GM12878 (cell line): ENCODE measurements at regions of chrX and their contacts with region 1.

Region 1: DNA sequence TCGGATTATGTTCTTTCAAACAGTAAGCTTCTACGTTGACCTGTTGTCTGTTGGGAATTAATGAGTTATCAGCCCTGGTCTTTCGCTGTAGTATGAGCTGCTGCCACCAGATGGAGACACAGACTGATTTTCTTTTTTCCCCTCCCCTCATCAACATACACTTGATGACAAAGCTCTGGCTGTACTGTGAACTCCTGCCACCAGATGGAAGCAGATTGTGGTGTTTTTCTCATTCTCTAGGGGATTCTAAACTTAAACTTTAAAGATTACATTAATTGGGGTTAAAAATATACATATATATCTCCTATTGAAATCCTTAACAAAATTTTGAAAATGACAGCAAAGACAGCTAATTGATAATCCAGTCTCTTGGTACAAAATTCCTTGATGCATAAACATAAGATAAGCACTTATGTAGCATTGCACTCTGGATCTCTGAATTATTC is 44.8 kb downstream of the SMS start:
- DNase-seq: peak; percentile 67
- ATAC-seq: peak; percentile 74
- H3K4me3 ChIP-seq: no peak overlapping the region
- H3K27ac ChIP-seq: no peak overlapping the region
- H3K4me1 ChIP-seq: peaks cover 4% of the 10 kb centered on the region; the same call in 1 of the 2 replicates
- H3K27me3 ChIP-seq: no peaks in the 10 kb centered on the region
- CTCF ChIP-seq: peak; percentile 86 to 99 (median 97); a peak in 5 of 6 replicates
- EP300 ChIP-seq: no peak
- POLR2A ChIP-seq: no peak
- RAD21 ChIP-seq: peak; percentile 95

Region 2: GRCh38 chrX:22012051-22012450 is 26.7 kb after region 1 on chrX:
- CTCF ChIA-PET with region 1: interaction called, 4 read pairs
- POLR2A ChIA-PET with region 1: no interaction called
- RAD21 ChIA-PET with region 1: interaction called, 4 read pairs
- SMC1A ChIA-PET with region 1: interaction called, 10 read pairs
- in situ Hi-C with region 1: no loop called
- intact Hi-C with region 1: no loop called
- DNase-seq: no peak
- ATAC-seq: peak; percentile 51
- H3K4me3 ChIP-seq: no peak overlapping the region
- H3K27ac ChIP-seq: no peak overlapping the region
- H3K4me1 ChIP-seq: no peaks in the 10 kb centered on the region
- H3K27me3 ChIP-seq: no peaks in the 10 kb centered on the region
- CTCF ChIP-seq: no peak
- EP300 ChIP-seq: no peak
- POLR2A ChIP-seq: no peak
- RAD21 ChIP-seq: no peak

Region 3: GRCh38 chrX:22063284-22063683 is 77.9 kb after region 1 on chrX:
- CTCF ChIA-PET with region 1: interaction called, 23 read pairs
- POLR2A ChIA-PET with region 1: interaction called, 23 read pairs
- RAD21 ChIA-PET with region 1: interaction called, 82 read pairs
- SMC1A ChIA-PET with region 1: interaction called, 168 read pairs
- in situ Hi-C with region 1: no loop called
- intact Hi-C with region 1: loop called (anchors 2 kb)
- DNase-seq: peak; percentile 64
- ATAC-seq: peak; percentile 74
- H3K4me3 ChIP-seq: no peak overlapping the region
- H3K27ac ChIP-seq: peak overlapping the region; percentile 74
- H3K4me1 ChIP-seq: peaks cover 20% of the 10 kb centered on the region
- H3K27me3 ChIP-seq: no peaks in the 10 kb centered on the region
- CTCF ChIP-seq: no peak
- EP300 ChIP-seq: peak; percentile 52 to 73; a peak in 2 of 4 replicates
- POLR2A ChIP-seq: no peak
- RAD21 ChIP-seq: no peak

Region 4: DNA sequence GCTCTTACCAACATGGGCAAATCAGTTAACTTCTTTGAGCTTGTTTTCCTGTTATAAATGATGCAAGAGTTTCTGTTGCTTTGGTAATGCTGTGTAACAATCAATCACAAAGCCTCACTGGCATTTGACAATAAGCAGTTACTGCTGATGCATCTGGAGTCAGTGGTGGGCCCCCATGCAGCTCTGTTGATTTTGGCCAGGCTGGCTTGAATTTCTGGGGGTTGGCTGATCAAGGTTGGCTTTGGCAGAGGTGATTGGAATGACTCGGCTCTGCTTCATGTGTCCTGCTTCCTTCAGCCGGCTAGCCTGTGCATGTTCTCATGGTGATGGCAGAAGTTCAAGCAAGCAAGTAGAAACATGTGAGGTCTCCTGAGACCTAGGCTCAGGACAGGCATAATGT is 137.2 kb after region 1 on chrX:
- CTCF ChIA-PET with region 1: interaction called, 13 read pairs
- POLR2A ChIA-PET with region 1: interaction called, 6 read pairs
- RAD21 ChIA-PET with region 1: interaction called, 7 read pairs
- SMC1A ChIA-PET with region 1: interaction called, 11 read pairs
- in situ Hi-C with region 1: no loop called
- intact Hi-C with region 1: no loop called
- DNase-seq: no peak
- ATAC-seq: peak; percentile 37
- H3K4me3 ChIP-seq: no peak overlapping the region
- H3K27ac ChIP-seq: no peak overlapping the region
- H3K4me1 ChIP-seq: no peaks in the 10 kb centered on the region
- H3K27me3 ChIP-seq: no peaks in the 10 kb centered on the region
- CTCF ChIP-seq: no peak
- EP300 ChIP-seq: no peak
- POLR2A ChIP-seq: no peak
- RAD21 ChIP-seq: no peak

Region 5: GRCh38 chrX:22192417-22193060 is 207.2 kb after region 1 on chrX:
- CTCF ChIA-PET with region 1: interaction called, 22 read pairs
- POLR2A ChIA-PET with region 1: no interaction called
- RAD21 ChIA-PET with region 1: interaction called, 16 read pairs
- SMC1A ChIA-PET with region 1: interaction called, 23 read pairs
- in situ Hi-C with region 1: loop called (anchors 5 kb)
- intact Hi-C with region 1: loop called (anchors 1 kb)
- DNase-seq: peak; percentile 3
- ATAC-seq: peak; percentile 96
- H3K4me3 ChIP-seq: no peak overlapping the region
- H3K27ac ChIP-seq: no peak overlapping the region
- H3K4me1 ChIP-seq: no peaks in the 10 kb centered on the region
- H3K27me3 ChIP-seq: no peaks in the 10 kb centered on the region
- CTCF ChIP-seq: peak; percentile 73 to 82 (median 76)
- EP300 ChIP-seq: no peak
- POLR2A ChIP-seq: no peak
- RAD21 ChIP-seq: peak; percentile 58

Region 6: GRCh38 chrX:22748093-22748999 is 763.0 kb after region 1 on chrX:
- CTCF ChIA-PET with region 1: interaction called, 69 read pairs
- POLR2A ChIA-PET with region 1: no interaction called
- RAD21 ChIA-PET with region 1: interaction called, 33 read pairs
- SMC1A ChIA-PET with region 1: interaction called, 46 read pairs
- in situ Hi-C with region 1: loop called (anchors 5 kb)
- intact Hi-C with region 1: loop called (anchors 1 kb)
- DNase-seq: no peak
- ATAC-seq: peak; percentile 96
- H3K4me3 ChIP-seq: no peak overlapping the region
- H3K27ac ChIP-seq: no peak overlapping the region
- H3K4me1 ChIP-seq: no peaks in the 10 kb centered on the region
- H3K27me3 ChIP-seq: no peaks in the 10 kb centered on the region
- CTCF ChIP-seq: peak; percentile 67 to 82 (median 80)
- EP300 ChIP-seq: no peak
- POLR2A ChIP-seq: no peak
- RAD21 ChIP-seq: peak; percentile 52

Region 7: DNA sequence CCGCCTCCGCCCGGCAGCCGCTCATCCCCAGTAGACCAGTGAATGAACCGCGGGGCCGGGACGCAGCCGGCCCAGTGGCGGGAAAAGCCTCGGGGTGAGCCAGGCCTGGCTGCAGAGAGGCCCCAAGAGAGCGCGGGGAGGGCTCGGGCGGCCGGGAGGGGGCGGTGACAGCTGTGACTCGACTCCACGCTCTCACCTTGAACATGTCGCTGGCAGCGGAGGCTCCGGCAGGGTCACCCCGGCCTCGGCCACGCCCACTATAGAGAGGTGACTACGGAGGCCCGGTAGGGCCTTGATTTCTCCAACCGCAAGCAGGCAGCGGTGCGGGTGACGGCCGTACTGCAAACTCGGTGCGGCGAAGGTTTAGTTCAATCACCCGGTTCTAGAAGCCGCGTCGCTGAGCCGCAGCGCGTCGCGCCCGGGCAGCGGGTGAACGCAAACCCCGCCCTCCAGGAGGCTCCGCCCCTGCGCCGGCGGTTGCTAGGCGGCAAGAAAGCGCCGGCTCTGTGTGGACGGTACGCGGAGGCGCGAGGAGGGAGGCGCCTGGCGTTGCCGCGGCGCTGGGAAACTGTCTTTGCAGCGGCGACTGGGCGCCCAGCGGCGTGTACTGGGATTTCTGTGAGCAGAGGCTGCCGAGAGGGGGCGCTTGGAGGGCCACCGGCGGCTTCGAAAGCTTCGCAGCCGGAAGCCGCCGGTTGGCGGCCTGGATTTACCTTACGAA is 1922.3 kb after region 1 on chrX and contains the starts of genes APOO and CXorf58:
- CTCF ChIA-PET with region 1: interaction called, 16 read pairs
- POLR2A ChIA-PET with region 1: no interaction called
- RAD21 ChIA-PET with region 1: interaction called, 18 read pairs
- SMC1A ChIA-PET with region 1: interaction called, 7 read pairs
- in situ Hi-C with region 1: loop called (anchors 10 kb)
- intact Hi-C with region 1: no loop called
- DNase-seq: peak; percentile 54
- ATAC-seq: peak; percentile 95
- H3K4me3 ChIP-seq: peak within 1 kb of the TSS; percentile 78
- H3K27ac ChIP-seq: peak within 1 kb of the TSS; percentile 73
- H3K4me1 ChIP-seq: no peaks in the 10 kb centered on the region; the same call in 1 of the 2 replicates
- H3K27me3 ChIP-seq: no peaks in the 10 kb centered on the region
- CTCF ChIP-seq: peak; percentile 73 to 83 (median 76)
- EP300 ChIP-seq: no peak; a peak in 1 of 4 replicates
- POLR2A ChIP-seq: peak; percentile 81
- RAD21 ChIP-seq: peak; percentile 51
- polyA plus RNA-seq, gene APOO: 41.8 to 42.9 TPM
- polyA plus RNA-seq, gene CXorf58: not detected